ENCODE measurements at regions of chr16 and their contacts with region 1.

Region 1: GRCh38 chr16:3059000-3059722 is 6.3 kb upstream of the IL32 start:
- DNase-seq: peak; percentile 76 to 97 (median 89)
- ATAC-seq: peak; percentile 95
- H3K4me3 ChIP-seq: peak overlapping the region; percentile 77
- H3K4me3 Mint-ChIP-seq: peak overlapping the region; percentile 79 to 95 (median 88)
- H3K27ac ChIP-seq: peak overlapping the region; percentile 89
- H3K27ac Mint-ChIP-seq: peak overlapping the region in 8 of 9 donors; percentile 72 to 91 (median 85)
- H3K4me1 ChIP-seq: peaks cover 25 to 46% of the 10 kb centered on the region in 2 donors
- H3K4me1 Mint-ChIP-seq: peaks cover 39 to 63% (median 47%) of the 10 kb centered on the region in 7 donors
- H3K27me3 ChIP-seq: no peaks in the 10 kb centered on the region
- H3K27me3 Mint-ChIP-seq: no peaks in the 10 kb centered on the region

Region 2: GRCh38 chr16:3003582-3004302 is 55.4 kb before region 1 on chr16:
- CTCF ChIA-PET with region 1: interaction called, 3 read pairs
- POLR2A ChIA-PET with region 1: no interaction called
- intact Hi-C with region 1: loop called (anchors 1 to 2 kb)
- DNase-seq: peak; percentile 78 to 98 (median 96)
- ATAC-seq: peak; percentile 99
- H3K4me3 ChIP-seq: no peak overlapping the region
- H3K4me3 Mint-ChIP-seq: peak overlapping the region; percentile 76 to 82 (median 80)
- H3K27ac ChIP-seq: no peak overlapping the region
- H3K27ac Mint-ChIP-seq: peak overlapping the region in 5 of 9 donors; percentile 41 to 81 (median 45)
- H3K4me1 ChIP-seq: peaks cover 19 to 21% of the 10 kb centered on the region in 2 donors
- H3K4me1 Mint-ChIP-seq: peaks cover 18 to 32% (median 25%) of the 10 kb centered on the region in 7 donors
- H3K27me3 ChIP-seq: no peaks in the 10 kb centered on the region
- H3K27me3 Mint-ChIP-seq: peaks cover 0 to 17% (median 0%) of the 10 kb centered on the region in 5 donors

Region 3: DNA sequence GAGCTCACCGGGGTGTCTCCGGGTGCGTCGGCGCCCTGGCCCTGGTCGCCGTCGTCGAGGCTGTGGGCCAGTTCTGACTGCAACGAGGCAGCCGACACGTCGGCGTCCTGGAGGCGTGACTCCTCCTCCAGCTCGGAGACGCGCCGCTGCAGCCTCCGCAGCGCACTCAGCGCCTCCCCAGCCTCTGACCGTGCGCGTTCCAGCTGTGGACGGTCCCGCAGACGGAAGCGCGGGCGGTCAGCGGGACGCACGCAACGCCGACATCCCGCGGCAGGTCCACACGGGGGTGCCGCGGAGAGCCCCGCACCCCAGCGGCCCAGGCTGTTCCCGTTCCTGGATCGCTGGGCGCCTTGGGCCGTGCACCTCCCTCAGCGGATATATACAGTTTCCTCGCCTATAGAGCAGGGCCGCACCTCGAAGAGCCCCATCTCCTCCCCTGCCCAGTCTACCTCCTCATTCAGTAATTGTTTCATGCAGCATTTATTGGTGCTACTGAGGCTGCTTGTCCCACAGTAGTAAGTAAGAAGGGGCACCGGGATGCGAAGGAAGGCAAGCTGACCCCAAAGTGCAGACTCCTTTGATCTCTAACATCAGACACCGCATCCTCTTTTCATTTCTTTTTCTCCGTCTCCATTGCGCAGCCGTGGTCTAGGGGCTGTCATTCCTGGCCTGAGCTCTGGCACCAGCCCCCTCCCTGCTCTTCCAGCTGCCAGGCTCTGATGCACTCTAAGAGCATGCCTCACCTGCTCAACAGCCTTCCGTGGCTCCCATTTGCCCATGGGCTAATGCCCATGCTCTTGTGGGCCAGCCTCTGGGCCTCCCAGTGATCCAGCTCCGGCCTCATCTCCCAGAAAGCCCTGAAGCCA is 29.4 kb before region 1 on chr16:
- CTCF ChIA-PET with region 1: interaction called, 16 read pairs
- POLR2A ChIA-PET with region 1: interaction called, 5 read pairs
- intact Hi-C with region 1: loop called in 1 of 2 experiments (anchors 1 kb)
- DNase-seq: peak in 1 of 9 donors; percentile 68
- ATAC-seq: peak; percentile 17
- H3K4me3 ChIP-seq: peak overlapping the region; percentile 43
- H3K4me3 Mint-ChIP-seq: peak overlapping the region; percentile 50 to 82 (median 70)
- H3K27ac ChIP-seq: no peak overlapping the region
- H3K27ac Mint-ChIP-seq: peak overlapping the region in 3 of 9 donors; percentile 26 to 60 (median 40)
- H3K4me1 ChIP-seq: peaks cover 18% of the 10 kb centered on the region in 2 donors
- H3K4me1 Mint-ChIP-seq: peaks cover 15 to 35% (median 25%) of the 10 kb centered on the region in 7 donors
- H3K27me3 ChIP-seq: peaks cover 6 to 9% of the 10 kb centered on the region in 2 donors
- H3K27me3 Mint-ChIP-seq: peaks cover 33 to 49% (median 37%) of the 10 kb centered on the region in 5 donors

Region 4: GRCh38 chr16:3074860-3075522 is 15.8 kb after region 1 on chr16:
- CTCF ChIA-PET with region 1: interaction called, 43 read pairs
- POLR2A ChIA-PET with region 1: interaction called, 113 read pairs
- intact Hi-C with region 1: loop called (anchors 1 to 2 kb)
- DNase-seq: peak; percentile 44 to 92 (median 90)
- ATAC-seq: peak; percentile 95
- H3K4me3 ChIP-seq: peak overlapping the region; percentile 37
- H3K4me3 Mint-ChIP-seq: peak overlapping the region; percentile 69 to 89 (median 83)
- H3K27ac ChIP-seq: peak overlapping the region; percentile 78
- H3K27ac Mint-ChIP-seq: peak overlapping the region; percentile 92 to 99 (median 99)
- H3K4me1 ChIP-seq: peaks cover 73 to 82% of the 10 kb centered on the region in 2 donors
- H3K4me1 Mint-ChIP-seq: peaks cover 67 to 93% (median 78%) of the 10 kb centered on the region in 7 donors
- H3K27me3 ChIP-seq: no peaks in the 10 kb centered on the region
- H3K27me3 Mint-ChIP-seq: no peaks in the 10 kb centered on the region

Region 5: DNA sequence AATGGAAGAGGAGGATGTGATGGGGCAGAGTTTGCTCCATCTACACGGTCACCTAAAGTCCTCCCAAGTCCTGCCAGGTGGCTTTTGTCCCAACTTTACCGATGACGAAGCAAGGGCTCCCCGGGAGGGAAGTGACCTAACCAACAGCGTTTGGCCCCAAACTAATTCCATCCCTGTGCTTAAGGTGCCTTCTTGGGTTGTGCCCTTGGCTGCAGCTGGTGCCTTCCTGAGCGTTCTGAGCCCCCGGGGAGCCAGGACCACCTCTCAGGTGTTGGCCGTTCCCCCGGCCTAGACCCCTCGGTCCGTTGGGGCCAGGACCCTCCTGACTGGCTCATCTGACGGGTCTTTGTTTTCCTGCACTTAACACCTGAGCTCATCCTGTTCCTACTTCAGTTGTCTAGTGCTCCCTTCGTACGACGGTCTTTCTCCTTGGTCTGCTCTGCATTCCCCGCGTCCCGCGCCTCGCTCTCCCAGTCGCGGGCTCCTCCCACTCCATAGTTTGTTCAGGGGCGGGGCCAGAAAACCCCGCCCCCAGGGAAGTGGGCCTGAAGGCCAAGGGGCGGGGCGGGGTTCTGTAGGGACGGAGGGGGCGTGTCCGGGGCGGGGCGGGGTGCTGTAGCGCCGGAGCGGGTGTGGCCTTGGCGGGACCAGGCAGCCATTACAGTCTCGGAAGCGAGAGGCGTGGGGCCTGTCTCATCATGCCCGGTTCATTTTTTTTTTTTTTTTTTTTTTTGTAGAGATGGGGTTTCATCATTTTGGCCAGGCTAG is 40.8 kb after region 1 on chr16:
- CTCF ChIA-PET with region 1: interaction called, 5 read pairs
- POLR2A ChIA-PET with region 1: interaction called, 65 read pairs
- intact Hi-C with region 1: loop called (anchors 1 kb)
- DNase-seq: peak; percentile 67 to 94 (median 75)
- ATAC-seq: peak; percentile 94
- H3K4me3 ChIP-seq: peak overlapping the region; percentile 46
- H3K4me3 Mint-ChIP-seq: peak overlapping the region; percentile 71 to 98 (median 82)
- H3K27ac ChIP-seq: peak overlapping the region; percentile 35
- H3K27ac Mint-ChIP-seq: peak overlapping the region; percentile 74 to 93 (median 86)
- H3K4me1 ChIP-seq: peaks cover 25 to 31% of the 10 kb centered on the region in 2 donors
- H3K4me1 Mint-ChIP-seq: peaks cover 27 to 65% (median 54%) of the 10 kb centered on the region in 7 donors
- H3K27me3 ChIP-seq: no peaks in the 10 kb centered on the region
- H3K27me3 Mint-ChIP-seq: no peaks in the 10 kb centered on the region

Region 6: DNA sequence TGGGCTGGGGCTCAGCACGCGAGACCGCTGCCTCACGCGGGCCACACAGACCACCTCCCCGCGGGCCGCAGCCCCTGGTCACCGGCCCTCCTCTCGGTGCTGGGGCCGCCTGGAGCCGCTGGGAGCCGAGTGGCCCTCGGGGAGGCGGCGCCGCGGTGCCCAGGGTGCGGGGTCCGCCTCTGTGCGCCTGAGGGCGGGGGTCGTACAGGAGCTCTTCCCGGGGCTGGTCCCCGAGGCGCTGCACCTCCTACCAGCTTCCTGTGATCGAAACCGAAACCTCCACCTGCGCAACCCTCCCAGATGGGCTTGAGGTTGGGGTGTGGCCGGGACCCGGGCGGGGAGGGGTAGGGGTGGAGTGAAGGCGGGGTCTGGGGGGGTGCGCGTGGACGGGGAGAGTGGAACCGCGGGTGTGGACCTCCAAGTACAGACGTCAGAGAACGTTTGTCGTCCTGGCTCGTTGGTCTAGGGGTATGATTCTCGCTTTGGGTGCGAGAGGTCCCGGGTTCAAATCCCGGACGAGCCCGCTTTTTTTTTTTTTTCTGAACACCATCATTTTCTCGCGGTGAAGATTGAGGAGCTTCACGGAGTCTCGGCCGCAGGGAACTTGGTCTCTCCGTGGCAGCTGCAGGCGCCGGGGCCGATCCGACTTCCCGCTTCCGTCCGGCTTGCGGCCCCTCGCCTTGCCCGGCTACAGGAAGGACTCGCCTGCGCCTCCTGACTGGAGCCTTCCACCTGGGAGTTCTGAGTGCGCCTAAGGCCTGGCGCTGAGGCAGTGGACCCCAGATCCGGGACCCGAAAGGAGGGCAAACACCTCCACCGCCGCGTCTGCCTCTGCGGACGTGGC is 99.5 kb after region 1 on chr16:
- CTCF ChIA-PET with region 1: interaction called, 11 read pairs
- POLR2A ChIA-PET with region 1: interaction called, 10 read pairs
- intact Hi-C with region 1: loop called in 1 of 2 experiments (anchors 2 kb)
- DNase-seq: peak; percentile 80 to 98 (median 91)
- ATAC-seq: peak; percentile 97
- H3K4me3 ChIP-seq: peak overlapping the region; percentile 86
- H3K4me3 Mint-ChIP-seq: peak overlapping the region; percentile 87 to 94 (median 92)
- H3K27ac ChIP-seq: peak overlapping the region; percentile 86
- H3K27ac Mint-ChIP-seq: peak overlapping the region; percentile 90 to 99 (median 95)
- H3K4me1 ChIP-seq: peaks cover 5 to 9% of the 10 kb centered on the region in 2 donors
- H3K4me1 Mint-ChIP-seq: peaks cover 10 to 42% (median 28%) of the 10 kb centered on the region in 7 donors
- H3K27me3 ChIP-seq: no peaks in the 10 kb centered on the region
- H3K27me3 Mint-ChIP-seq: peaks cover 0 to 26% (median 0%) of the 10 kb centered on the region in 5 donors

Region 7: GRCh38 chr16:3165111-3165822 is 106.1 kb after region 1 on chr16:
- CTCF ChIA-PET with region 1: interaction called, 6 read pairs
- POLR2A ChIA-PET with region 1: interaction called, 6 read pairs
- intact Hi-C with region 1: loop called in 1 of 2 experiments (anchors 1 kb)
- DNase-seq: no peak
- ATAC-seq: no peak
- H3K4me3 ChIP-seq: no peak overlapping the region
- H3K4me3 Mint-ChIP-seq: peak overlapping the region; percentile 39 to 80 (median 58)
- H3K27ac ChIP-seq: peak overlapping the region; percentile 55
- H3K27ac Mint-ChIP-seq: peak overlapping the region; percentile 36 to 93 (median 71)
- H3K4me1 ChIP-seq: peaks cover under 1 to 4% of the 10 kb centered on the region in 2 donors
- H3K4me1 Mint-ChIP-seq: peaks cover 9 to 24% (median 10%) of the 10 kb centered on the region in 7 donors
- H3K27me3 ChIP-seq: no peaks in the 10 kb centered on the region
- H3K27me3 Mint-ChIP-seq: peaks cover 0 to 27% (median 0%) of the 10 kb centered on the region in 5 donors